RWPE1 (cell line): ENCODE measurements at regions of chr12 and their contacts with region 1.

Region 1: DNA sequence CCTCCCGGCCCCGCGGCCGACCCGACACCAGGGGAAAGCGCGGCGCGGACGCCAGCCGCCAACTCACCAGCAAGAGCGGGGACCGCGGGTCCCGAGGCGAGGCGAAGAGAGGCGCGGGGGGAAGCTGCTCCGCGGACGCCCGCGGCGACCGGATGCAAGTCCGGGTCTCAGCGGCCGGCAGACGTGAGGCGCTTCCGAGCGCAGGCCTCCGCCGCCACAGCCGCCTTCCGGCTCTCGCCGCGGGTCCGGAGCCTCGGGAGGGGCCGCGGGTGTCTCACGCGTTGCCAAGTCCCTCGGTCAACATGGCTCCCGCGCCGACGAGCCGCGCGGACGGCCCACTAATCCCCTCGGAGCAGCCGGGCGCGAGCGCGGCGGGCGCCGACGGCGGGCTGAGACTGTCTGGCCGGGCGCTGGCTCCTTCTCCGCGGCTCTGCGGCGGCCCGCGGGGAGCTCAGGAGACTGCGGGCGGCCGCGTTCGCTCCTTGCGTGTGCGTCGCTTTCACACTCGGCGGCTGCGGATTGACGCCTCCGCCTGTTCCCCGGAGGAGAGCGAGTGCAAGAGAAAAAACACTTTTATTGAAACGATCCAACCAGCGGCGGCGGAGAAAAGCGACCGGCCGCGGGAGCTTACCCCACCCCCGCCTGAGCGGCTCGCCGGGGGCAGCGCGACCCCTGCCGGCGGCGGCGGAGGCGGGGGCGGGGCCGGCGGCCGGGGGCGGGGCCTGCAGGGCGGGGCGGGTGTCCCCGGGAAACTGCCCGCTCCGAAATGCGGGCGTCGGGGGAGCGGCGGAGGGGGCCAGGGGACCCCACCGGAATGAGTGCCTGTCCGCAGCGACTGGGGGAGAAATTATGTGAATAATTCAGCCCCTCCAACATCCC is at the start of gene CDK17:
- DNase-seq: peak; percentile 90
- H3K27ac ChIP-seq: peak within 1 kb of the TSS; percentile 100
- CTCF ChIP-seq: peak; percentile 86

Region 2: GRCh38 chr12:95674631-95675030 is 725.5 kb before region 1 on chr12:
- CTCF ChIA-PET with region 1: no interaction called
- POLR2A ChIA-PET with region 1: no interaction called
- DNase-seq: no peak
- H3K27ac ChIP-seq: no peak overlapping the region
- CTCF ChIP-seq: no peak

Region 3: GRCh38 chr12:96371790-96372699 is 28.1 kb before region 1 on chr12:
- CTCF ChIA-PET with region 1: interaction called, 10 read pairs
- POLR2A ChIA-PET with region 1: no interaction called
- DNase-seq: no peak
- H3K27ac ChIP-seq: no peak overlapping the region
- CTCF ChIP-seq: no peak

Region 4: GRCh38 chr12:96416033-96416801 is 16.1 kb after region 1 on chr12:
- CTCF ChIA-PET with region 1: interaction called, 12 read pairs
- POLR2A ChIA-PET with region 1: no interaction called
- DNase-seq: peak; percentile 74
- H3K27ac ChIP-seq: no peak overlapping the region
- CTCF ChIP-seq: no peak

Region 5: DNA sequence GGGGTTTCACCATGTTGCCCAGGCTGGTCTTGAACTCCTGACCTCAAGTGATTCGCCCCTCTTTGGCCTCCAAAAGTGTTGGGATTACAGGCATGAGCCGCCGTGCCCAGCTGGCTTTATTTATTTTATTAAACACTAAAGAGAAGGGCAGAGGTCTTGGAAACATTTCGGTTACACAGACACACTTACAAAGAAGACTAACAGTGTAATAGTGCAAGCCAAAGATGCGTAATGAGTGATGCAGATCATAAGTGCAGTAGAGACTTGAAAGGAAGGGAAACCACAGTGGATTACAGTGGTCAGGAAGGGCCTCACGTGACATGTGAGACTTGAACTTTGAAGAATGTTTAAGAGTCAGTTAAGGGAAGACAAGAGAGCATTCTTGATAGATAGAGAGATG is 33.9 kb after region 1 on chr12:
- CTCF ChIA-PET with region 1: no interaction called
- POLR2A ChIA-PET with region 1: no interaction called
- DNase-seq: no peak
- H3K27ac ChIP-seq: no peak overlapping the region
- CTCF ChIP-seq: no peak

Region 6: GRCh38 chr12:96456265-96456974 is 56.3 kb after region 1 on chr12:
- CTCF ChIA-PET with region 1: no interaction called
- POLR2A ChIA-PET with region 1: no interaction called
- DNase-seq: no peak
- H3K27ac ChIP-seq: no peak overlapping the region
- CTCF ChIP-seq: no peak

Region 7: DNA sequence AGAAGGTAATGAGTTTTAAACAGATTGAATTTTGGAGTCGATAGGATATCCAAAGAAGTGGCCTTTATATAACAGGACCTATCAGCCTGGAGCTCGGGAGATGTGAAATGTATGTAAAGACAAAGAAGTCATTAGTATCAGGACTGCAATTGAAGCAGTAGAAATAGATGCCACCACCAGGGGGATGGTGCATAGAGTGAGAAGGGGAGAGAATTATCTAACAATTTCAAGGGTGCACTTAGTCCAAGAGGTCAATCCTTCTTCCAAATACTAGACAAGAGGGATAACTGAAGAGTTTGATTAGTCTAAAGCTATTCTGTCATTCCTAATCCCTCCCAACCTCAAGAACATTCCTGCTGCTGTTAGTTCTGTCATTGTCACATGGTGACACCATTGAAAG is 217.0 kb after region 1 on chr12:
- CTCF ChIA-PET with region 1: no interaction called
- POLR2A ChIA-PET with region 1: no interaction called
- DNase-seq: no peak
- H3K27ac ChIP-seq: no peak overlapping the region
- CTCF ChIP-seq: no peak